Dendritic cell treated with granulocyte-macrophage colony-stimulating factor and Interleukin-4, amounts not matched to agents 40 ng/mL and 50 ng/mL, for 4 days (primary cell): ENCODE measurements at regions of chr17 and their contacts with region 1.

Region 1: DNA sequence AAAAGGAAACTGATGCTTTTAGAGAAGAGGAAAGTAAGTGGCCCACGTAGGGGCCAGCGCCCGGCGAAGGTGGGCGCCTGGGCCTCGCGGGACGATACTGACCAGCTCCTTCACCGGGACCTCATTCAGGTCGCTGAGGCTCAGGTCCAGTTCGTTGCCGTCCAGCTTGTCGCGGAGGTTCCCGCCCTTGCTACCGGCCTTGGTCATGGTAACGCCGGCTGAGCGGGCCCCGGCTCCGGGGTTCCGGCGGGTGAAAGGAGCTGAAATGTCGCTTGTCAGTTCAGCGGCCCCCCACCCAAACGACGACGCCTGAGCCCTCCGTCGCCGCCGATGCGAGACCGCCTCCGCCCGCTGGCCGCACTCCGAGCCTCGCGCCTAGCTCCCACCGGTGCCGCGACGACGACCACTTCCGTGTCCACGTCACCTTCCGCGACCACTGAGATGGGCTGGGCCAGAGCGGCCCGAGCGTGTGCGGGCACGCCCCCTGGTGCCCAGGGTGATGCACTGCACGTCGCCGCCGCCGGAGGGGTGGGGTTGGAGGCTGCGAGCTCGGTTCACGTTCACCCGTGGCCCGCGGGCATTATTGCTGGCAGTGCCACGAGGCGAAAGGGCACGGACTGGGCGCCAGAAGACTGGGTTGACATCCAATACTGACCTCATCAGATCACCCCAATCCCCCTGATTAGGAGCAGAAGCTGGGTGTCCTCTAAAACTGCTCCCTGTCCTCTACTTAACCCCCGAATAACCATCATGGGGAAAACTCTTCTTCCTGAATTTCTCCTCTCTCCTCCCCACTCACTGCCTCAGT is at the start of gene LRRC59:
- H3K4me3 Mint-ChIP-seq: peak within 1 kb of the TSS; percentile 78
- H3K27ac Mint-ChIP-seq: peak within 1 kb of the TSS; percentile 86
- H3K4me1 Mint-ChIP-seq: peaks cover 42% of the 10 kb centered on the region
- H3K27me3 Mint-ChIP-seq: peaks cover 1% of the 10 kb centered on the region

Region 2: GRCh38 chr17:50425682-50426471 is 28.6 kb after region 1 on chr17 and contains the start of gene ACSF2:
- intact Hi-C with region 1: loop called (anchors 1 kb)
- H3K4me3 Mint-ChIP-seq: peak within 1 kb of the TSS; percentile 86
- H3K27ac Mint-ChIP-seq: peak within 1 kb of the TSS; percentile 83
- H3K4me1 Mint-ChIP-seq: peaks cover 61% of the 10 kb centered on the region
- H3K27me3 Mint-ChIP-seq: no peaks in the 10 kb centered on the region